GM10248 (cell line): ENCODE measurements at regions of chr11 and their contacts with region 1.

Region 1: GRCh38 chr11:66677599-66678375 is at the start of gene RBM4B:
- DNase-seq: peak; percentile 98
- CTCF ChIP-seq: no peak

Region 2: DNA sequence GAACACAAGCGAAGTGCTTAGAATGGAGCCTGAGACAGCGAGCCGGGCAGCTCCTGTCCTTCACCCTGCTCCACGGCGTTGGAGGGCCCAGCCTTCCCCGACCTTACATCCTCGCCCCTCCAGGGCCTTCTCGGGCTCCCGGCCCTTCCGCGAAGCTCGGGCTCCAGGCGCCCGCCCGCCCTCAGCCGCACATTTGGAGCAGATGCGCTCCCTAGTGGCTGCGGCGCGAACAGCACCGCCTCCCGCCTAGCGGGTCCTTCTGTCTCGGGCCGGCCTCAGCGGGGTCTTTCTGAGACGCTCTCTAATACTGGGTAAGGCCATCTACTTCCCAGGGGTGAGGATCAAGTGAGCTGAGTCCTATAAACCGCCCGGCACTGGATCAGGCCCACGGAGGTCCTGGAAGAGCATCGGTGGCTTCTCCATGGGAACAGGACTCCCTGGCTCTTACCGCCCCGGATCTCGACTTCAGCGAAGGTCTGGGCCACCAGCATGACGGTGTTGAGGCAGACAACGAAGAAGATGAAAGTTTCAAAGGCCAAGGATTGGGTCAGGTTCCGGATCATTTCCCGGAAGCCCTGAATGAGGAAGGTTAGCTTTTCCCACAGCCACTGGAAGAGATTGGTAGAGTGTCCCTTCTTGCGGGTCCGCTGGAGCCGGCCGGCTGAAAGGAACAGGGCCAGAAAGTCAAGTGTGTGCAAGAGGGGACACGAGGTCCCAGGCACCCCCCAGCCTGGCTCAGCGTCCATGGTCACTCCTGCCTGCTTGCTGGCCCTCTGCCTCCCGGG is 655.2 kb before region 1 on chr11:
- CTCF ChIA-PET with region 1: no interaction called
- POLR2A ChIA-PET with region 1: no interaction called
- DNase-seq: peak; percentile 92
- CTCF ChIP-seq: peak; percentile 97

Region 3: DNA sequence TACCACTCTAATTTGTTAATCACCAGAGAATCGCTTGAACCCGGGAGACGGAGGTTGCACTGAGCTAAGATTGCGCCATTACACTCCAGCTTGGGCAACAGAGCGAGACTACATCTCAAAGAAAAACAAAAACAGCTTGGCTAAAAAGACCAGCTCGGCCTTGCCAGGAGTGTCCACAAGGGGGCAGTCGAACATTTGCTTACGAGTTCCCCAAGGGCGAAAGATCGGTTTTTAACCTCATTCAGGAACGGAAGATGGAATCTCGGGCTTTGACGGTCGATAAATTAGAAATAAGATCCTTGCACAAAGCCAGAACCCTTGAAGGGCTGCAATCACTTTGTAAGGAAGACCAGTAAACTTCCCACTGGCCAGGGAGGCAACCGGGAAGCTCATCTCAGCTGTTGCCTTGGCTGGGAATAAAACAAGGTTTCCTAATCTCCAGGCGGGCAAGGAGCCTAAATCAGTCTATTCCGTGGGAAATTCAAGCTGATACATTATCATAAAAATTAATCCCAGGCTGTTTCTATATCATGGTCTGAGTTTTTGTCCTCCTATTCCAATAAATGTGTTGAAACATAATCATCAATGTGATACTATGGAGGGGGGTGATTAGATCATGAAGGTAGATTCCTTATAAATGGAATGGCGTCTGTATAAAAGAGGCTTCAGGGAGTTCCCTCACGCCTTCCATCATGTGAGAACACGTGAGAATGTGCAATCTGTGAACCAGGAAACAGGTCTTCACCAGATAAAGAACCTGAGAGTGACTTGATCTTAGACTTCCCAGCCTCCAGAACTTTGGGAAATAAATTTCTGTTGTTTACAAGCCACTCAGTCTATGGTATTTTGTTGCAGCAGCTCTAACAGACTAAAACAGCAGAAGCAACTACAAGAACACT is 291.4 kb before region 1 on chr11:
- CTCF ChIA-PET with region 1: interaction called, 13 read pairs
- POLR2A ChIA-PET with region 1: interaction called, 3 read pairs
- DNase-seq: peak; percentile 69
- CTCF ChIP-seq: peak; percentile 93

Region 4: GRCh38 chr11:66408488-66409214 is 269.1 kb before region 1 on chr11:
- CTCF ChIA-PET with region 1: interaction called, 82 read pairs
- POLR2A ChIA-PET with region 1: interaction called, 3 read pairs
- DNase-seq: peak; percentile 95
- CTCF ChIP-seq: peak; percentile 100

Region 5: GRCh38 chr11:66421492-66422205 is 256.1 kb before region 1 on chr11:
- CTCF ChIA-PET with region 1: interaction called, 16 read pairs
- POLR2A ChIA-PET with region 1: interaction called, 4 read pairs
- DNase-seq: peak; percentile 93
- CTCF ChIP-seq: no peak

Region 6: GRCh38 chr11:66568124-66568916 is 109.5 kb before region 1 on chr11 and contains the start of gene CTSF:
- CTCF ChIA-PET with region 1: interaction called, 23 read pairs
- POLR2A ChIA-PET with region 1: interaction called, 5 read pairs
- DNase-seq: peak; percentile 92
- CTCF ChIP-seq: no peak

Region 7: DNA sequence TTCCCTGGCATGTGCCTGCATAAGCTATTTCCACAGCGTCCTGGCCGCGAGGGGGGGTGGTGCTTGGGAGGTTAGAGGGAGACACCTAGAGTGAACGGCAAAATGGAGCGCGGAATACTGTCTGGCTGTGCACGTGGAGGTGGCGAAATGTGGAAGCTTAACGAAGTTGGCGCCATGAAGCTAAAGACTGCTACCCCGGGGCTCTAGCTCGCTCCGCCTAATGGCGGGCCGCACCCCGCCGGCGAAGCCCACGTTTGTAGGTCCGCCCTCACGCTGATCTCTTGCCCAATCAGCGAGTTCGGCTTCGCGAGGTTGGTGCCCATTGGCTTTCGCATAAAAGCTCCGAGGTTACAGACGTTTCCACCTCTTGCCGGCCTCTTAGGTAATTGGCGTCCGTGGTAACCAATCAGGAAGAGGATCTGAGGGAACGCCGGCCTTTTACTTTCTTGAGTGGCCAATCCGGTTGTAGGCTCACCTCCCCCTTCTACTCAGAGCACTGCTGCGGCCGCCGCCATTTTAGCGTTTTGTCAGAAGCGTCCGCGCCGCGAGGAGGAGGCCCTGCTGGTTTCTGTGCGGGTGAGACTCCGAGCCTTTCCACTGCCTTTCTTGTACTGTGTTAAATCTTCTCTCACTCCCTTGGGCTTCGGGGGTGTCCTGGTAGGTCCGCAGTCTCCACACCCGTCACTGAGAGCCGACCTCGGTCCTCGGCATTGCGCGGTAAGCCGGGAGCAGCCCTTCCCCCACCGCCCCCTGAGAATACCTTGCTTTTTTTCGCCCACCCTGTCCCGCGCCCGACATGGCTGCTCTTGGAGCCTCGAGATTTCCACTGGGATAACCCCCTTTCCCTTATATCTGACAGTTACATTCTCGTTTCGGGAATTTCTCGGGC is 39.4 kb before region 1 on chr11 and contains the start of gene RBM4:
- CTCF ChIA-PET with region 1: interaction called, 16 read pairs
- POLR2A ChIA-PET with region 1: interaction called, 12 read pairs
- DNase-seq: peak; percentile 98
- CTCF ChIP-seq: no peak

Region 8: DNA sequence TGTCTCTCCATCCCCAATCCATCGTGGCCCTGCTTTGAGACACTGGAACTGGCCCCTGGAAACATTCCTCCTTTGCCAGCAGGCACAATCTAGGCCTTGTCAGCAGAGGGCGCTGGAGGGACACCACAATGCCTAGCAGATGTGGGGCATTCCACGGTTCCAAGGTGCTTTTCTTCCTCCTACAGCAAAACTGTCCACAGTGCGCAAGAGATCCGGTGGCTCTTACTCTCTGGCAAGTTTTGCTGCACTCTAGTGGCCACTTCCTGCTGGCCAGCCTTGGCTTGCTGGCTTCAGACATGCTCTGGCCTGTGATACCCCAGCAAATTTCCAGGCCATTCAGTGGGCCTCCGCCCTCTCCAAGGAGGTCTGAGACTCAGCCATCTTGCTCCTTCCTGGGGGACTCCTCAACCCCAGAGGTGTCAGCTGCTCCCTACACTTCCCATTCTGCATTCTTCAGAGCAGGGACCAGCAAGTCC is 17.0 kb after region 1 on chr11:
- CTCF ChIA-PET with region 1: interaction called, 10 read pairs
- POLR2A ChIA-PET with region 1: no interaction called
- DNase-seq: peak; percentile 90
- CTCF ChIP-seq: peak; percentile 88

Region 9: GRCh38 chr11:66710384-66710927 is 32.7 kb after region 1 on chr11:
- CTCF ChIA-PET with region 1: no interaction called
- POLR2A ChIA-PET with region 1: no interaction called
- DNase-seq: no peak
- CTCF ChIP-seq: no peak